ENCODE measurements at regions of chr7 and their contacts with region 1.

Region 1: GRCh38 chr7:8217200-8218068 is 44.5 kb downstream of the ICA1 start:
- DNase-seq: no peak
- ATAC-seq: peak in 1 of 2 donors; percentile 61
- H3K4me3 ChIP-seq: no peak overlapping the region
- H3K27ac ChIP-seq: no peak overlapping the region
- H3K4me1 ChIP-seq: no peaks in the 10 kb centered on the region
- H3K27me3 ChIP-seq: no peaks in the 10 kb centered on the region

Region 2: DNA sequence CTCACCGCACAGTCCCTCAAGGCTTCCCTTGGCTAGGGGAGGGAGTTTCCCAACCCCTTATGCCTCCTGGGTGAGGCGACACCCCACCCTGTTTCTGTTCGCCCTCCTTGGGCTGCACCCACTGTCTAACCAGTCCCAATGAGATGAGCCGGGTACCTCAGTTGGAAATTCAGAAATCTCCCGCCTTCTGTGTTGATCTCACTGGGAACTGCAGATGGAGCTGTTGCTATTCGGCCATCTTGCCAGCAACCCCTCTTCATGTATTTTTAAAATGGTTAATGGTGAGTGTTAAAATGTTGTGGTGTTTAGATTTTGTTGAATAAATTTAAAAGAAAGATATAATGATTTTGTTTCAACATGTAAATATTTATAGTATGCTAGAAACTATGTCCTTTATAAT is 554.9 kb before region 1 on chr7:
- intact Hi-C with region 1: loop called in 1 of 4 experiments (anchors 10 kb)
- DNase-seq: no peak
- ATAC-seq: no peak
- H3K4me3 ChIP-seq: no peak overlapping the region
- H3K27ac ChIP-seq: no peak overlapping the region
- H3K4me1 ChIP-seq: no peaks in the 10 kb centered on the region
- H3K27me3 ChIP-seq: no peaks in the 10 kb centered on the region

Region 3: GRCh38 chr7:7681179-7681935 is 536.1 kb before region 1 on chr7:
- intact Hi-C with region 1: loop called in 1 of 4 experiments (anchors 10 kb)
- DNase-seq: no peak
- ATAC-seq: peak; percentile 84
- H3K4me3 ChIP-seq: no peak overlapping the region
- H3K27ac ChIP-seq: no peak overlapping the region
- H3K4me1 ChIP-seq: peaks cover 4% of the 10 kb centered on the region
- H3K27me3 ChIP-seq: no peaks in the 10 kb centered on the region

Region 4: DNA sequence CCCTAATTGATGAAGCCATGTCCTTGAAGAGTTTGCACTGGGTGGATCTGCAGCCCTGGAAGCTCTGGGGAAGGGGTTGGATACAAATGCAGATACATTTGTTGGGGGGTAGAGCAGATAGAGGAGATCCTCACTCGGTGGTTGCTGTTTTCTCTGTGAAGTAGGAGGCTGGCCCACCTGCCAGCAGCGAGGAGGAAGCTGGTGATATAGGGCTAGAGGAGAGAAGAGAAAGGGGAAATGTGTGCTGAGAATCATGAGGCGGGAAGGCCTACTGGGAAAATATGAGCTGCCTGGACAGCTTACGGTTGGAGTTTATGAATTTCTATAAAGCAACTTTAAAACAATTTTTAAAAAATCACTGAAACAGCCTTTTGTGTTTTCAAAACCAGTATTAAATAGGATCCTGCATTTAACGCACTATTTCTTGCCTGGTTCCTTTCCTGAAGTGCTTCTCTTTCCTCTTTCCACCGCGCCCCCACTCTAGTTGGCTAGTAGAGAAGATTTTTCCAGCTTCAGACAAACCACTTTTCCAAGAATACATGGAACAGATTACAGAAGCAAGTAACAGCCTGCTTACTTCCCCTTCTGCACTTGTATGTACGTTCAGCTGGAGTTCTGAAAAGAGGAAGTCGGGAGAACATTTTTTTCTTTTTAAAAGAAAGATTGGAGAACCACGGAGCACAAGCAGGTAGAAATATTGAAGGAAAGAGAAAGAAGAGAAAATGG is 349.4 kb before region 1 on chr7:
- intact Hi-C with region 1: no loop called
- DNase-seq: peak in 1 of 3 donors; percentile 46
- ATAC-seq: peak; percentile 64 to 85
- H3K4me3 ChIP-seq: no peak overlapping the region
- H3K27ac ChIP-seq: no peak overlapping the region
- H3K4me1 ChIP-seq: peaks cover 2% of the 10 kb centered on the region
- H3K27me3 ChIP-seq: no peaks in the 10 kb centered on the region